ENCODE measurements at regions of chr22 and their contacts with region 1.

Region 1: DNA sequence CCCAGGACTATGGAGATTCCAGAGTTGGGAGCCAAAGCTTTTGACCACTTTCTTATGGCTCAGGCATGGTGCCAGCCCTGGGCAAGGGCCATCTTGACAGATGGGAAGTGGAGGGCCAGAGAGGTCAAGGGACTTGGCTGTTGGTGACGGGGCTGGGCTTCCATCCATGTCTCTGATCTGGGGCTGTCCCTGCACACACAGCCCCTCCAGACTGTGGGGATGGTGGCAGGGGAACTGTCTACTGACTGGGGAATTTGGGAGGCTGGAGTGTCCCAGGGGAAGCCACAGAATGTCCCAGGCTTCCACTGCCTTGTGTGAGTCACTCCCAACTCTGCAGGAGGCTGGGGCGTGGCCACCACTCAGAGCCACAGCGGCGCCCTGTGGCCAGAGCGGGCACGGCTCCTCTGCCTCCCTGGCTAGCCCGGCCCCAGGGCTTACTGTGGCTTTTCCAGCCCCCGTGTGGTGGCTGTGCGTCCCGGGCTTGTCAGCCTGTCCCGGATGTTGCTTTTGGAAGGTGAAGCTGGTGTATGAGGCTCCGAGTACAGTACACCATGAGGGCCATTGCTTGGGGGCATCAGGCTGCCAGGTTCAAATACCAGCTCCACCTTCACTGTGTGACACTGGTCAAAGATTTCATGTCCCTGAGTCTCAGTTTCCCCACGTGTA is 19.6 kb downstream of the C22orf23 start:
- DNase-seq: peak; percentile 31
- H3K4me3 ChIP-seq: no peak overlapping the region
- CTCF ChIP-seq: peak; percentile 100

Region 2: DNA sequence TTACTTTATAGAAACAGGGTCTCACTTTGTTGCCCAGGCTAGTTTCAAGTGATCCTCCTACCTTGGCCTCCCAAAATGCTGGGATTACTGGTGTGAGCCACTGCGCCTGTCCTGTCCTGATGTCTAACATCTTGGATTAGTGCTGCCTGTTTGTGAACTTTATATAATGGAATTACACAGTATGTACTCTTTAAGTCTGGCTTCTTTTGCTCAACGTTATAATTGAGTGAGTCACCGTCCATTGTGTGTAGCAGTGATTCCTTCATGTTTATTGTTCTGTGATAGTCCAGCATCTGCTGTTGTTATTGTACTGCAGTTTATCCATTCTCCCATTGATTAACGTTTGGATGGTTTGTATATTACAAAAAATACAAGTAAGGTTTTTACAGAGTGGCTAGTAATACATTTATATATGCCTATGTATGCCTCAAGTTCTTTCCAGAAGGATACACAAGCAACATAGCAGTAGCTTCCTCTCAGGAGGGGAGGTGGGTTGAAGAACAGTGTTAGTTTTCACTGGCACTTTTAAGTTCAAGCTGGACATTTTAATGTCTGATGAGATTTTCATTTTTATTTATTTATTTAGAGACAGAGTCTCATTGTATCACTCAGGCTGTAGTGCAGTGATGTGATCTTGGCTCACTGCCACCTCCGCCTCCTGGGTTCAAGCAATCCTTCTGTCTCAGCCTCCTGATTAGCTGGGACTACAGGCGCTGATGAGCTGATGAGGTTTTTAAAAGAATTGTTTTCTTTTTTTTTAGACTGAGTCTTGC is 53.0 kb before region 1 on chr22:
- CTCF ChIA-PET with region 1: interaction called, 121 read pairs
- POLR2A ChIA-PET with region 1: no interaction called
- DNase-seq: no peak
- H3K4me3 ChIP-seq: no peak overlapping the region
- CTCF ChIP-seq: no peak

Region 3: GRCh38 chr22:37896181-37896592 is 37.7 kb before region 1 on chr22:
- CTCF ChIA-PET with region 1: interaction called, 12 read pairs
- POLR2A ChIA-PET with region 1: no interaction called
- DNase-seq: no peak
- H3K4me3 ChIP-seq: no peak overlapping the region
- CTCF ChIP-seq: no peak

Region 4: GRCh38 chr22:37905534-37906363 is 28.1 kb before region 1 on chr22 and contains the start of gene MICALL1:
- CTCF ChIA-PET with region 1: interaction called, 159 read pairs
- POLR2A ChIA-PET with region 1: no interaction called
- DNase-seq: no peak
- H3K4me3 ChIP-seq: peak within 1 kb of the TSS; percentile 80
- CTCF ChIP-seq: no peak

Region 5: DNA sequence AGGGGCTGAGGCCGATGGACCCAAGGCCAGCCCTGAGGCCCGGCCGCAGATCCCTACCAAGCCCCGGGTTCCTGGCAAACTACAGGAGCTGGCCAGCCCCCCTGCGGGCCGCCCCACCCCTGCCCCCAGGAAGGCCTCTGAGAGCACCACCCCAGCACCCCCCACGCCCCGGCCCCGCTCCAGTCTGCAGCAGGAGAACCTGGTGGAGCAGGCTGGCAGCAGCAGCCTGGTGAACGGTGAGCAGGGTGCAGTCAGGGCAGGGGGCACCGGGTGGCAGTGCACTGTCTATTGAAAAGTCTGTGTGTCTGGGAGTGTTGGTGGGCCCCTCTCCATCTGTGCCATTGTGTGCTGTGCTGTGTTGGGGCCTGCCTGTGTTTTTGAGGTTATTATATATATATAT is 11.7 kb before region 1 on chr22:
- CTCF ChIA-PET with region 1: interaction called, 159 read pairs
- POLR2A ChIA-PET with region 1: no interaction called
- DNase-seq: no peak
- H3K4me3 ChIP-seq: no peak overlapping the region
- CTCF ChIP-seq: no peak

Region 6: DNA sequence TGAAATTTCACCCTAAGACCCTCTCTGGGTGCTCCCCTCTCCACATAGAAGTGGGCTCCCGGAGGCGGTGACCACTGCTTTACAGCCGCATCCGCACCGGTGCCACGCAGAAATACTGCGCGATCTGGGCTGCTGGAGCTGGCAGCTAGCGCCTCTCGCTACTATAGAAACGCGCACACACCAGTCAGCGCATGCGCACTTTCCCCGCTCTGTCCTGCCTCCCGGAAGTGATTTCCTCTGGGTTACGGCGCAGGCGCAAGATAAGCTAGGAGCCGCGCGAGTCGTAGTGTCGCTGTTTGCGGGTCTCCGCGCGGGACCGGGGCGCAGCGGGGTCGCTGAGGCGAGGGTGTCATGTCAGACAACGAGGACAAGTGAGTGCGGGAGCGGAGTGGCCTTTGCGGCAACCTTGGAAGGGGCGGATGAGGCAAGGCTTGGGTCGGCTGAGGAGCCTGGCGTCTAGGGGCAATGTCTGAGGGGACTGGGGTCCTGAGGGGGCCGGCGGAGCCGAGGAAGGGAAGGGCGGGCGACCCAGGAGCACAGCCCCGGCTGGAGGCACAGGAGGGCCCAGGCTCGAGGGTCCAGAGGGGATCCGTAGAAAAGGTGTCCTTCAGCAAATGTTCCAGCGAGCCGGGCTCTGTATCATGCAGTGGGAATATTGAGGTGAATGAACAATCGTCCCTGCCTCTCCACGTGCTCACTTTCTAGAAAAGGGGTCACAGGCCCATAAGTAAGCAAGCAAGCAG is 19.8 kb after region 1 on chr22 and contains the starts of genes C22orf23 and POLR2F:
- CTCF ChIA-PET with region 1: interaction called, 79 read pairs
- POLR2A ChIA-PET with region 1: interaction called, 3 read pairs
- DNase-seq: peak; percentile 36
- H3K4me3 ChIP-seq: peak within 1 kb of the TSS; percentile 100
- CTCF ChIP-seq: no peak

Region 7: DNA sequence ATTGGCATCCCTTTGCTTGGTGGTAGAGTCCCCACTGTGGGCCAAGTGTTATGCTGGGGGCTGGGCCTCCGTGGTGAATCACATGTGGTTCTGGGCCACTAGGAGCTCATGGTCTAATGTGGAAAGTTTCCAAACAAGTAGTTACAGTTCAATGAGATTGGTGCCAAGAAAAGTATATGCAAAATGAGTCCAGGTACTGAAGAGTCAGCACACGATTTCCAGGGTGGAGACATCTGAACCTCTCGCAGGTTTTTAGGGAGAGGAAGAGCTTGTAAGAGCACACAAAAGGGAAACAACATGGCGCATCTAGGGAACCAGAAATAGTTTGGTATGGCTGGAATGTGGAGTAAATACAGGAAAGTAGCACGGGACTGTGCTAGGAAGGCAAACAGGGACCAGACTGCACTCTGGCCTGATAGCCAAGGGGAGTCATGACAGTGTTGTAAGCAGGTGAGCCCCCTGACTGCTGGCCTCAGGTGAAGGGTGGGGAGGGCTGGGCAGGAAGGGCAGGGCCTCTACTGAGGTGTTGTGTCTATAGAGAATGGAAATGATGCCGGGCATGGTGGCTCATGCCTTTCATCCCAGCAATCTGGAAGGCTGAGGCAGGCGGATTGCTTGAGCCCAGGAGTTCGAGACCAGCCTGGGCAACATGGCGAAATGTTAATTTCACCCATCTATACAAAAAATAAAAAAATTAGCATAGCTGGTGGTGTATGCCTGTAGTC is 32.3 kb after region 1 on chr22:
- CTCF ChIA-PET with region 1: interaction called, 11 read pairs
- POLR2A ChIA-PET with region 1: no interaction called
- DNase-seq: no peak
- H3K4me3 ChIP-seq: no peak overlapping the region
- CTCF ChIP-seq: no peak